WTC11 (cell line): ENCODE measurements at regions of chr2 and their contacts with region 1.

Region 1: DNA sequence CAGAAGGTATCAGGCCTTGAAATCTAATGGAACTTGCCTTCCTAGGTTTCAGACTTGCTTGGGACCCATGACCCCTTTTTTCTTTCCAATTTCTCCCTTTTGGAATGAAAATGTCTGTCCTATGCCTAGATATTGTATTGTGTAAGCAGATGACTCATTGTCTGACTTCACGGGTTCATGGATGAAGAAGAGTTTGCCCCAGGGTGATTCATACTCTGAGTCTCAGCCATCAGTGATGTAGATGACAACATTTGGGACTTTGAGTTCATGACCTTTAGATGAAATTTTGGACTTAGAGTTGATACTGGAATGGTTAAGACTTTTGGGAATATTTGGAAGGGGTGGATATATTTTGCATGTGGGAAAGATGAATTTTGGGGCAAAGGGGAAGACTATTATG is 11.2 kb upstream of the SCYGR5 start:
- DNase-seq: no peak
- ATAC-seq: no peak
- H3K4me3 Mint-ChIP-seq: no peak overlapping the region
- H3K27ac Mint-ChIP-seq: no peak overlapping the region
- H3K4me1 Mint-ChIP-seq: no peaks in the 10 kb centered on the region
- H3K27me3 Mint-ChIP-seq: no peaks in the 10 kb centered on the region
- CTCF ChIP-seq: no peak

Region 2: DNA sequence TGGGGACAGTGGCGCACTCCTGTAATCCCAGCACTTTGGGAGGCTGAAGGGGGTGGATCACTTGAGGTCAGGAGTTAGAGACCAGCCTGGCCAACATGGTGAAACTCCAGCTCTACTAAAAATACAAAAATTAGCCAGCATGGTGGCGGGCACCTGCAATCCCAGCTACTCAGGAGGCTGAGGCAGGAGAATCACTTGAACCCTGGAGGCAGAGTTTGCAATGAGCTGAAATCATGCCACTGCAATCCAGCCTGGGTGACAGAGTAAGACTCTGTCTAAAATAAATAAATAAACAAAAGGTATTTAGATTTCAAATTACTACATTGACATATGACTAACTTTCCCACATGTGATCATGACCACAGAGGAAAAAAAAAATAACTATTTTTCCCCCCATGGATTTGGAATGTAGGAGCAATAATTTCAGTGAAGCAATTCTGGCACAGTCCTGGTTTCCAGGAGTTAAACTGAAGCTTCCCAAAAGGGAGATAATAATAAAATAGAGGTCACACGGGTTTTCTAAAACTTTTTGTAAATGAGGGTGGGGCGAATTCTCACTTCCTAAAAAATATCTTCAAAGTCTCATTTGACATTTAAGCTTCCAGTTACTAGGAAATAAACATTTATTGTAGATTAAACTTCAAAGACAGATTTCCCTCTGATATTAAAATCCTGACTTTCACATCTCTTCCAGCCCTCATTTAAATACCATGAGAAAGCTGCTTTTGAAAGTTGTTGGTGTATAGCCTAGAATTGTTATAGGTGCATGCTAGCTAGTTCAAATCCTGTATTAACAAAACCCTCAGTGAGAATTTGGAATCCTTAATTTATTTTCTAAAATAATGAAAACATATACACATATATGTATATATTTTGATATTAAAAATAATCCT is 41.6 kb after region 1 on chr2:
- CTCF ChIA-PET with region 1: no interaction called
- POLR2A ChIA-PET with region 1: no interaction called
- DNase-seq: no peak
- ATAC-seq: no peak
- H3K4me3 Mint-ChIP-seq: no peak overlapping the region
- H3K27ac Mint-ChIP-seq: no peak overlapping the region
- H3K4me1 Mint-ChIP-seq: no peaks in the 10 kb centered on the region
- H3K27me3 Mint-ChIP-seq: no peaks in the 10 kb centered on the region
- CTCF ChIP-seq: no peak

Region 3: DNA sequence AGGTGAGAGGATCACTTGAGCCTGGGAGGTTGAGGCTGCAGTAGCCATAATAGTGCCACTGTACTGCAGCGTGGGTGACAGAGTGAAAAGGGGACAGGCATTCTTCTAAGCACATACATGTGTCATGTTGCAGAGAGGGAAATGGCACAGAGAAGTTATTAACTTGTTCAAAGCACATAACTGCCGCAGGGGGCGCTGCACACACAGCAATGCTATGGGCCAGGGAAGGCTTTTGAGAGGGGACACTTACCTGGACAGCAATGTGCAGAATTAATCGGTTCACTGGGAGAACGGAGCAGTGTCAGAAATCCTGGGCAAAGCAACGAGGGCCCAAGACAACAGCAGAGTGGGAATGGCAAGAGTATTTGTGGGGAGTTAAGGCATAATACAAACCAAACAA is 92.6 kb after region 1 on chr2:
- CTCF ChIA-PET with region 1: interaction called, 20 read pairs
- POLR2A ChIA-PET with region 1: no interaction called
- DNase-seq: peak; percentile 77
- ATAC-seq: peak; percentile 95
- H3K4me3 Mint-ChIP-seq: no peak overlapping the region
- H3K27ac Mint-ChIP-seq: no peak overlapping the region; the same call in 1 of the 2 replicates
- H3K4me1 Mint-ChIP-seq: peaks cover 1% of the 10 kb centered on the region; the same call in 1 of the 2 replicates
- H3K27me3 Mint-ChIP-seq: no peaks in the 10 kb centered on the region
- CTCF ChIP-seq: peak; percentile 74